Dorsolateral prefrontal cortex (tissue), 120 donors: ENCODE measurements at regions of chr16 and their contacts with region 1.

Region 1: DNA sequence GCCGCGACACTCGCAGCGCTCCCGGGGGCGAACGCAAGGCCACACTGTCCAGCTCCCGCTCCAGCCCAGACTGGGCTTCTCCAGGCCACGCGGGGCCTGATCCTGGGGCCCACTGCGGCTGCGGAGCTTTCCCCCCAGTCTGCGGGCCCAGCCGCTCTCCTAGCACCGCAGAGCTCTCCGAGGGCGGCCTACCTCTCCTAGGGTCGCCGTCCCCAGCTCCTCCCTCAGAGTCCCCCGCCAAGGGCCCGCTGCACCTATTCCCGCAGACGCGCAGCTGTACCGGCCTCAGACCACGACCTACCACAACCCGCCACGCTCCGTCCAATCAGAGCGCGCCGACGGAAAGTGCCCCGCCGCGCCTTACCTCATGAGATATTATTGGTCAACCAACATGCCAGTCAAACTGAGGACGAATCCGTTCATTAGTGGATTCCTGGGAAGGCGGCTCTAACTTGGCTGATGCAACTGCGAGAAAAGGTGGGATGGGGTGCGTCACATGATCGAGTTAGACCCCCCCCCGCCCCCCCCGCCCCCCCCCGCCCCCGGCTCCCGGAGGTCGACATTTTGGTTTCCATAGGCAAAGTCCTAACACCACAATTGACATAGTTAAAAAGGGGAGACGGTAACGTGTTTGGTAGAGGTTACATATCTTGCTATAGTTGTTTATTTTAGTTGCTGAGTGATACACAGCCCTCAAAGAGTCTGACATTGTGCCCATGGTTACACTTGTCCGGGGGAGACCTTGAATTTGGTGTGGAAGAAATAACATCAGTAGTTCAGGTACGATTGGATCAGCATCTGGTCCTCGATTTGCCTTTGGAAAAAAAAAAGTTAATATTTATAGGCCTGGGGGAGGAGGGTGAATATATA is at the start of gene AARS1:
- DNase-seq: peak; percentile 92 to 98 (median 97)
- H3K4me3 ChIP-seq: peak within 1 kb of the TSS; percentile 64 to 100 (median 94)
- H3K27ac ChIP-seq: peak within 1 kb of the TSS in 58 of 59 donors; percentile 49 to 97 (median 86)
- H3K27me3 ChIP-seq: no peaks in the 10 kb centered on the region
- CTCF ChIP-seq: peak in 9 of 56 donors; percentile 4 to 23 (median 15)
- total RNA-seq, gene AARS1: 134 to 280 (median 218) TPM

Region 2: GRCh38 chr16:70251629-70252354 is 37.7 kb before region 1 on chr16 and contains the start of gene EXOSC6:
- intact Hi-C with region 1: loop called in 1 of 2 experiments (anchors 5 kb)
- DNase-seq: peak; percentile 79 to 93 (median 90)
- H3K4me3 ChIP-seq: peak within 1 kb of the TSS; percentile 46 to 82 (median 73)
- H3K27ac ChIP-seq: peak within 1 kb of the TSS in 56 of 59 donors; percentile 23 to 94 (median 81)
- H3K27me3 ChIP-seq: no peaks in the 10 kb centered on the region
- CTCF ChIP-seq: peak; percentile 78 to 99 (median 94)
- total RNA-seq, gene EXOSC6: 34.2 to 76.3 (median 53.1) TPM

Region 3: GRCh38 chr16:70267516-70267915 is 21.9 kb before region 1 on chr16:
- intact Hi-C with region 1: no loop called
- DNase-seq: no peak
- H3K4me3 ChIP-seq: peak overlapping the region in 1 of 59 donors; percentile 8
- H3K27ac ChIP-seq: peak overlapping the region in 1 of 59 donors; percentile 2
- H3K27me3 ChIP-seq: no peaks in the 10 kb centered on the region
- CTCF ChIP-seq: peak in 55 of 56 donors; percentile 22 to 69 (median 56)

Region 4: DNA sequence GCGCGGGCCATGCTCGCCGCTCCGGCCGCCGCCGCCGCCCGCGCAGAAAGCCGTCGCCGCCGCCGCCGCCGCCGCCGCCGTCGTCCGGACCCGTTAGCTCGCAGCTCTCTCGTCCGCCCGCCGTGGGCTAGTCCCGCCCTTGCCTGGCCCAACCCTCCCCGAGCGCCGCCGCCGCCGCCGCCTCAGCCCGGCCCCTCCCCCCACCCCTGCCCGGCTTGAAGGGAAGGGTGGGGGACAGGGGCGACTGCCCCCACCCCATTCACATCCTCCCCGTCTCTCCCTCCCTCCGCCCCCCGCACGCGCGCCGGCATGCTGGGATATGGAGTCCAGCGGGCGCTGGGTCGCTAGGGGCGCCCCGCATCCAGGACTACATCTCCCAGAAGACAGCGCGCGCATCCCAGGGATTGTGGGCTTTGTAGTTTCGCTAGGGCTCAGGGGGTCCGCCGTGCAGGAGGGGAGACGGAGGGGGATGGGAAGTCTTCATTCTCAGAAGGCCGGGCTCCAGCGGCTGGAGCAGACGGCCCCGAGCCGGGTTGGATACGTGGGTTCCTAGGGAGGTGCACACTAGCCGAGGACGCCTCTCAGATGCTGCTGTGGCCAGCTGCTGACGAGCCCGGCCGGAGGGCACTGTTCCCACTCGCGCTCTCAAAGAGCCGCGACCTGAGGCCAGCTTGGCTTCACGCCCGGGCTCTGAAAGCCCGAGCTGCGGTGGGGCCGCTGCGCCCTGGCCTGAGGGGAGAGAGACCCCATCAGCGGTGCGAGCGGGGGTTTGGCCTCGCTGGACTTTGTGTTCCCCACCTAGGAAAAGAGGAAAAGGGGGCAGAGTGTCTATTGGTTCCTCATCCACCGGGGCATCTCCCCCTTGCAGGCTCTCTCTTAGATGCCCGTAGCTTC is 149.8 kb after region 1 on chr16 and contains the start of gene ST3GAL2:
- intact Hi-C with region 1: loop called in 1 of 2 experiments (anchors 10 kb)
- DNase-seq: peak; percentile 90 to 96 (median 94)
- H3K4me3 ChIP-seq: peak within 1 kb of the TSS; percentile 48 to 99 (median 81)
- H3K27ac ChIP-seq: peak within 1 kb of the TSS in 58 of 59 donors; percentile 31 to 96 (median 86)
- H3K27me3 ChIP-seq: no peaks in the 10 kb centered on the region
- CTCF ChIP-seq: peak in 29 of 56 donors; percentile 4 to 55 (median 30)
- total RNA-seq, gene ST3GAL2: 15.9 to 62.9 (median 30.9) TPM